ENCODE measurements at regions of chr17 and their contacts with region 1.

Region 1: GRCh38 chr17:8900626-8901585 is 33.4 kb upstream of the PIK3R6 start:
- DNase-seq: no peak
- H3K4me3 ChIP-seq: no peak overlapping the region
- H3K27me3 ChIP-seq: peaks cover 1% of the 10 kb centered on the region; the same call in 1 of the 2 replicates
- CTCF ChIP-seq: no peak

Region 2: DNA sequence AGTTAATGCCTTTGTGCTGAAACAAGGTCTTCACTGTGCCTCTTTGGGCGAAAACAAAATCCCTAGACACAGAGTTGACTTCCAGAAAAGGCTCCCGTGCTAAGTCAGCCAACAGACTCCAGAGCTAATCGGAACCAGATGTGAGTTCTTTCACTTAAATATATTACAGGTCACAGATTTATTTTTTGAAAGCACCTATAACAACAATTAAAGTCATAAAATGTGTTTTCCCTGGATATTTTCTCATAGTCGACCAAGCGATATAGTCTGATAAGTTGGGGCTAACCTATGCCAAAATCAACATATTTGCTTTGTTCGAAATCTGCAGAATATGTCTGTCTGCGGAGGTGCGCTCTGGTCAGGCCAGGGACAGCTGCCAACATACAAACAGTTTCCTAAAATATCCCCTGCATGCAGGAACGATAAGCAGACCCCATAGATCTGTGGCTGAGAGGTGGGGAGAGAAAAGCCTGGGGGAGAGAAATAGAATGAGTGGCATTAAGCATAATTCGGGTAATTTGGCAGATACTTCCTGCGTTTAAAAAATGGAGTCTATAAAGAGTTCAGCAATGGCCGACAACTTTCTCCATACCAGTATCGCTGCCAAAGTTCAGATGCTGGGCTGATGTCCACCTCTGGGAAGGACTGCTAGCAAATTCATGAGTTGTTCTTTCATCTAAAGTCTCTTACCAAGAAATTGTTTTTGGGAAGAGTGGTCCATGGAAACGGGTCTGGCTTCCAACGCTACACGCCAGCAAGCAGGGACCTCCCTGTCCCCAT is 219.5 kb before region 1 on chr17:
- CTCF ChIA-PET with region 1: no interaction called
- POLR2A ChIA-PET with region 1: no interaction called
- DNase-seq: peak; percentile 65
- H3K4me3 ChIP-seq: no peak overlapping the region
- H3K27me3 ChIP-seq: no peaks in the 10 kb centered on the region; the same call in 1 of the 2 replicates
- CTCF ChIP-seq: no peak

Region 3: DNA sequence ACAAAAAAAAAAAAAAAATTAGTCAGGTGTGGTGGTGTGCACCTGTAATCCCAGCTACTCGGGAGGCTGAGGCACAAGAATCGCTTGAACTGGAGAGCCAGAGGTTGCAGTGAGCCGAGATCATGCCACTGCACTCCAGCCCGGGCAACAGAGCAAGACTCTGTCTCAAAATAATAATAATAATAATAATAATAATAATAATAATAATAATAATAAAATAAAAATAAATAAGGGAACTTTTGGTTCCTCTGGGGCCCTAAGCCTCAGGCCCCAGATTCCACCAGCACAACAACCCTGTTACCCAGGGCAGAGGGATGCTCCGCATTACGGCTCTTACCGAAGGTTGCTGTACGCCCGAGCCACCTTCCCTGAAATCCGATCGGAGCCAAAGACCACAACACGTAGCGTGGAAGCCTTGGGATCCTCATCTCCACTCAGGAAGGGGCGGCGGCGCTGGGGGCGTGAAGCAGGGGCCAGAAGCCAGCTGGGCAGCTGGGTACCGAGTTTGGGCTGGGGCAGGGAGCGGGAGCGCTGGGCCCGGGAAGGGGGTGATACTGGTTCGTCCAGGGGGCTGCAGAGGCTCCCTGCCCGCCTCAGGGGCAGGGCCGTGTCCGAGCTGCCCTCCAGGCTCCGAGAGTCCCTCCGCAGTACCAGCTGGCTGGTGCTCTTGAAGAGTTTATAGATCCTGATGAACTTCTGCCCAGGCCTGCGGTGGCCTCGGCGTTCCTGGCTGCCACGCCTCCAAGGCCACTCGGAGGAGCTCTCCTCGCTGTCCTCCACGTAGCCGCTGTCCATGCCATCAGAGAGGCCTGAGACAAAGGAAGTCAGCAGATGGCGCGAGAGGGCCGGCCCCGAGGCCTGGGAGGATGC is 12.8 kb before region 1 on chr17:
- CTCF ChIA-PET with region 1: interaction called, 17 read pairs
- POLR2A ChIA-PET with region 1: no interaction called
- DNase-seq: no peak
- H3K4me3 ChIP-seq: no peak overlapping the region
- H3K27me3 ChIP-seq: no peaks in the 10 kb centered on the region
- CTCF ChIP-seq: peak; percentile 62

Measured in BJ (cell line).